Activated CD4-positive, alpha-beta T cell treated with anti-CD3 and anti-CD28 coated beads for 36 hours (primary cell): ENCODE measurements at regions of chr1 and their contacts with region 1.

Region 1: GRCh38 chr1:84772428-84772943 is 82.2 kb upstream of the SSX2IP start:
- DNase-seq: peak; percentile 87
- ATAC-seq: peak; percentile 78
- H3K4me3 Mint-ChIP-seq: no peak overlapping the region
- H3K27ac Mint-ChIP-seq: no peak overlapping the region
- H3K4me1 Mint-ChIP-seq: no peaks in the 10 kb centered on the region
- H3K27me3 Mint-ChIP-seq: peaks cover 2% of the 10 kb centered on the region

Region 2: DNA sequence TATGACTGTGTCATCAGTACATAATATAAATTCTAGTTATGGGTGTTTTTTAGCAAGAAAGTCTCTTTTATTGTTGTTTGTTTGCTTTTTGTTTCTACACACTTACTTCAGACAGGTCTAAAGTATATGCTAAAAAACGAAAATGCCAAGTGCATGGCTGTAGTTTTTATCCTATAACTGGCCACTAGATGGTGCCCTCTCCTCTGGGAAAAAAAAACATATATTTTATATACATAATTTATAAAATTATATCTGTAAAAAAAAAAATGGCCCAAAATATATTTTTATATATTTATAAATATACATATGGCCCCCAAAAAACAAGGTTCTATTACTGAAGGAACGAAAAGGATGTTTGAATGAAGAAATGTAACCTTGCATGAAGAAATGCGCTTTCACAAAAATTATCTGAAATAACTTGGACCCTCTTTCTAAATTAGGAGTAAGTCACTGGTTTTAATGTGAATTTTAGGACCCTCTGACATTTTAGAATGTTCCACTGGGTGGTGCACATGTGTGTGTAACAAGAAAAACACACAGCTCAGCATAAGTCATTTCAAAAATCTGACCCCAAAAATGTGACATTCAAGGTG is 867.1 kb before region 1 on chr1:
- CTCF ChIA-PET with region 1: interaction called, 3 read pairs
- POLR2A ChIA-PET with region 1: no interaction called
- intact Hi-C with region 1: loop called in 1 of 2 experiments (anchors 1 kb)
- DNase-seq: no peak
- ATAC-seq: no peak
- H3K4me3 Mint-ChIP-seq: no peak overlapping the region
- H3K27ac Mint-ChIP-seq: no peak overlapping the region
- H3K4me1 Mint-ChIP-seq: no peaks in the 10 kb centered on the region
- H3K27me3 Mint-ChIP-seq: peaks cover 8% of the 10 kb centered on the region

Region 3: DNA sequence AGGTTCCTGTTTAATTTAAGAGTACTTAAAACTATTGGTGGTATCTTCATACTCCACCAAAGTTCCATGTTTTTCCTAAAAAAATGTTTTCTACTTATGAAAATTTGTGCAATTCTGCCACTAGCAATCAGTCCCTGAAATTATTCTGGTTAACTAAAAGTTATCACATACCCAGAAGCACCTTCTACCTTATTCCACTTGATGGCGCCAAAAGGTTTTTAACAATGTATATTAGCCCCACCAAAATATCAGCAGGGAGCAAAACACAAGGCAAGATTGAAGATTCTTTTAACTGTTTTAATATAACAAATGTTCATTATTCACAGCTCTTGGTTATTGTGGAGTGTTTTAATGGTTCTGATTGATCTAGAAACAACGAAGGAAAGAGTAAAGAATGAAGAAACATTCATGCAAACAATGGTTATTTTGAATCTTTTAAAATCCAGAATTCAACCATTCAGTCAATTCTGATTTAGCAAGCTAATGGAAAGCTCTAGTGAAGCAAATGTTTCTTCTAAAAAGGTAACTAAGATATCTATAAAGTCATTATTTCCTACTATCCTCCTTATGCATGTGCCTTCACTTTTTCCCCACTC is 840.7 kb before region 1 on chr1:
- CTCF ChIA-PET with region 1: interaction called, 3 read pairs
- POLR2A ChIA-PET with region 1: no interaction called
- intact Hi-C with region 1: loop called (anchors 1 to 2 kb)
- DNase-seq: peak; percentile 11
- ATAC-seq: peak; percentile 58
- H3K4me3 Mint-ChIP-seq: no peak overlapping the region
- H3K27ac Mint-ChIP-seq: no peak overlapping the region
- H3K4me1 Mint-ChIP-seq: no peaks in the 10 kb centered on the region
- H3K27me3 Mint-ChIP-seq: no peaks in the 10 kb centered on the region

Region 4: GRCh38 chr1:84758968-84759491 is 13.5 kb before region 1 on chr1:
- CTCF ChIA-PET with region 1: interaction called, 16 read pairs
- POLR2A ChIA-PET with region 1: interaction called, 11 read pairs
- intact Hi-C with region 1: no loop called
- DNase-seq: peak; percentile 58
- ATAC-seq: peak; percentile 64
- H3K4me3 Mint-ChIP-seq: peak overlapping the region; percentile 29
- H3K27ac Mint-ChIP-seq: peak overlapping the region; percentile 14
- H3K4me1 Mint-ChIP-seq: peaks cover 16% of the 10 kb centered on the region
- H3K27me3 Mint-ChIP-seq: peaks cover 8% of the 10 kb centered on the region

Region 5: GRCh38 chr1:84936116-84936810 is 163.8 kb after region 1 on chr1:
- CTCF ChIA-PET with region 1: interaction called, 16 read pairs
- POLR2A ChIA-PET with region 1: no interaction called
- intact Hi-C with region 1: loop called (anchors 2 kb)
- DNase-seq: peak; percentile 25
- ATAC-seq: peak; percentile 53
- H3K4me3 Mint-ChIP-seq: no peak overlapping the region
- H3K27ac Mint-ChIP-seq: no peak overlapping the region
- H3K4me1 Mint-ChIP-seq: peaks cover 4% of the 10 kb centered on the region
- H3K27me3 Mint-ChIP-seq: no peaks in the 10 kb centered on the region

Region 6: GRCh38 chr1:85450832-85451231 is 678.3 kb after region 1 on chr1:
- CTCF ChIA-PET with region 1: no interaction called
- POLR2A ChIA-PET with region 1: no interaction called
- intact Hi-C with region 1: no loop called
- DNase-seq: no peak
- ATAC-seq: no peak
- H3K4me3 Mint-ChIP-seq: no peak overlapping the region
- H3K27ac Mint-ChIP-seq: no peak overlapping the region
- H3K4me1 Mint-ChIP-seq: no peaks in the 10 kb centered on the region
- H3K27me3 Mint-ChIP-seq: peaks cover 12% of the 10 kb centered on the region